ENCODE measurements at regions of chr7 and their contacts with region 1.

Region 1: DNA sequence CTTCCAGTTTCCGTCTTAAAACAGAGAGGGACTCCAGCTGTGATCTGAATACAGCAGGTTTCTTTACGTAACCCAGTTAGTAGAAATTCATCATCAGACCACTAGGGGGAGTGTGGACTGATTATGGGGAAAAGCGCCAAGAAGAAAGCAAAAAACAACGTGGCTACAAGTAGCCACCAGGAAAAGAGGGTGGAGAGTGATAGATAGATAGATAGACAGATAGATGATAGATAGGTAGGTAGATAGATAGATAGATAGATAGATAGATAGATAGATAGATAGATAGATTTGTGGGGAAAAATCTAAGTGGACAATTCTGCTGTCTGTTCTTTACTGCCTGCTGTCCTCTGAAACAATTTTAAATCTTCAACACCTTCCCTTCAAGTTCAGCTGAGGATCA is 12.7 kb upstream of the AKR1B10 start:
- DNase-seq: no peak
- H3K4me3 ChIP-seq: no peak overlapping the region
- H3K27ac ChIP-seq: no peak overlapping the region
- H3K4me1 ChIP-seq: peaks cover 0 to 22% (median 16%) of the 10 kb centered on the region in 4 donors
- H3K27me3 ChIP-seq: peaks cover 0 to 5% of the 10 kb centered on the region in 2 donors
- CTCF ChIP-seq: peak; percentile 82 to 85

Region 2: DNA sequence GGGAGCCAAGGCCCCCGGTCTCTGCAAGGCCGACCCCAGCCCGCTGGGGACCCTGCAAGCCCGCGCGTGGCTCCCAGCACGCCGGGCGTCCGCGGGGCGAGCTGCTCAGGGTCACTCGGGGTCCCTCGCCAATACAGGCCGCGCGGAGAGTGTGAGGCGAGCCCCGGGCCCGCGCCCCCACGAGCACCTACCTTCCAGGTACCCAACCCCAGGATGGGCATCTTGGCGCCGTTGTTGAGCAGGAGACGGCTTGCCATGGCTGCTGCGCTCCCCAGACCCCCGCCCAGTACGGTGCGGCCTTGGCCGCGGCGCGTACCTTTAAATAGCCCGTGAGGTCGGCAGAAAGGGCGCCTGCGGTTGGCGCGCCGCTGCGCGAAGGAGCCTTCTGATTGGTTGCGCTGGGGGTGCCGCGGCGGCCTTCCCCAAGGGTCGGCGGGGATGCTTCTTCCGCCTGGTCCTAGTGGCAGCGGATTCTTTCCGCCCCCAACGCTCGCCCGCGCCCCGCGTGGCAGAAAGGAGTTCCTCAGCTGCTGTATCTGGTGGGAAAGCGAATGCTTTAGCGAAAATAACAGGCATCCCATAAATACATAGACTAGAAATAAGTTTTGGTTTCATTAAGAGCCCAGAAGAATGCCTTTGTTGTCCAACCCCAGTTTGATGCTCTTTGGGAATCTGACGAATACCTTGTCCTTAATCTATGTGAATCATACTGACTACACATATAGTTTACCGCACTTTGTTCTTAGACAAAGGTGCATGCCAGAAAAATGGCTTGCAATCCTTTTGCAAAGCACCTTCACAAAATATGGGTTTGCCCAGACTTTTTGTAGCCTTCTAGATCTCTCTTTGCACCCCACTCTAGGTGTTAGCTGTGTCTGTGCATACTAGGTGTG is 55.6 kb before region 1 on chr7 and contains the start of gene AKR1B1:
- intact Hi-C with region 1: no loop called
- DNase-seq: peak; percentile 90 to 94
- H3K4me3 ChIP-seq: peak within 1 kb of the TSS; percentile 94 to 99
- H3K27ac ChIP-seq: peak within 1 kb of the TSS; percentile 92
- H3K4me1 ChIP-seq: peaks cover 0 to 33% (median 12%) of the 10 kb centered on the region in 4 donors
- H3K27me3 ChIP-seq: no peaks in the 10 kb centered on the region
- CTCF ChIP-seq: peak; percentile 50 to 59

Region 3: DNA sequence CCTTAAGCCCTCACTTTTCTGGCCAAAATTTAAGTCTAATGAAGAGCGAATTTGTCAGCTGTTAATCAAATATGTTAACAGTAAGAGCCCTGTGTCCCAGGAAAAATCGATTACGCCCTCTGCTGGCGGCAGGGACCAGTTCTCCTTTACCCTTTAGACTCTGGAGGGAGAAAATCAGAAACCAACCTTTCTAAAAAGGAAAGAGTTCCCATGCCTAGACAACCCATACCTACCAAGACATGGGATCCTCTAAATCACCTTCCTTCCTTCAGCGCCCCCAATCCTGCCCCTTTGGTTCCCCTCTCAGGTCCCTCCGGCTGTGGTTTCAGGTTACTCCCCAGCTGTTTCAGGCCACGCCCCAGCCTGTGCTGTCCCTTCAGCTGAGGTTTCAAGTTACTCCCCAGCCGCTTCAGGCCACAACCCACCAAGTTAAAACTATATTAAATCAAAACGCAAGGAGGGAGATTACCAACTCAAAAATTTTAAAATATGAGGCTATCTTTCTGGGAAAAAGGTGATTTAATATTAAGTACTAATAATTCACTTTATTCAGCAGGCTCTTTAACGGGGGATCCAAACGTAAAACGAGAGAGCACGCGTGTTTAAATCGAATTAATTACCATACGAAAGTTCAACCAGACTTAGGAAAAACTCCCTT is 32.9 kb after region 1 on chr7:
- intact Hi-C with region 1: loop called (anchors 5 kb)
- DNase-seq: peak; percentile 83 to 84
- H3K4me3 ChIP-seq: peak overlapping the region; percentile 14 to 46
- H3K27ac ChIP-seq: peak overlapping the region; percentile 17 to 42
- H3K4me1 ChIP-seq: no peaks in the 10 kb centered on the region
- H3K27me3 ChIP-seq: no peaks in the 10 kb centered on the region
- CTCF ChIP-seq: peak; percentile 71 to 77

Region 4: GRCh38 chr7:134986363-134987251 is 471.9 kb after region 1 on chr7 and contains the start of gene AGBL3:
- intact Hi-C with region 1: no loop called
- DNase-seq: peak; percentile 97 to 99
- H3K4me3 ChIP-seq: peak within 1 kb of the TSS; percentile 80 to 91
- H3K27ac ChIP-seq: peak within 1 kb of the TSS; percentile 91 to 95
- H3K4me1 ChIP-seq: peaks cover 0 to 27% (median 7%) of the 10 kb centered on the region in 4 donors
- H3K27me3 ChIP-seq: no peaks in the 10 kb centered on the region
- CTCF ChIP-seq: peak; percentile 52 to 58

Measured in tibial artery (tissue), 4 donors.